ENCODE measurements at regions of chr12 and their contacts with region 1.

Region 1: GRCh38 chr12:57175428-57176138 is 28.2 kb upstream of the LRP1-AS start:
- H3K4me3 ChIP-seq: no peak overlapping the region
- H3K27ac ChIP-seq: no peak overlapping the region
- H3K4me1 ChIP-seq: no peaks in the 10 kb centered on the region
- CTCF ChIP-seq: peak; percentile 92

Region 2: DNA sequence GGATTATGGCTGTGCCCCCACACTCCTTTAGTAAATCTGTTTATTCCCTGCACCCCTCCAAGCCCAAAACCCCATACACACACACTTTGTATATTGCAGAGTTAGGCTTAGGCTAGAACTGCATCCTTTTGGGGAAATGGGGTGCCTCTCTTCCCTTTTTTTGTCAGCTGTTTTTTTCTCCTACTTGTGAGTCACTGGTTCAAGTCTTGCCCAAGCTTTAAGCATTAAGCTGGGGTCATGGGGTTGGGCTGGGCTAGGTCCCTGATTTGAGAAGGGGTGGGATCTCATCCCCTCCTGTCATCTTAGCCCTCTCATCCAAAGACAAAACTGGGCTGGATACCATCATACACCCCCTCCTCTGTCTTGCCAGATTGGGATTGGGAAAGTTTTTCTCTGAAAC is 45.7 kb before region 1 on chr12:
- CTCF ChIA-PET with region 1: interaction called, 259 read pairs
- POLR2A ChIA-PET with region 1: interaction called, 18 read pairs
- H3K4me3 ChIP-seq: no peak overlapping the region
- H3K27ac ChIP-seq: no peak overlapping the region
- H3K4me1 ChIP-seq: peaks cover 10% of the 10 kb centered on the region
- CTCF ChIP-seq: no peak

Region 3: GRCh38 chr12:57135527-57136326 is 39.9 kb before region 1 on chr12:
- CTCF ChIA-PET with region 1: interaction called, 25 read pairs
- POLR2A ChIA-PET with region 1: no interaction called
- H3K4me3 ChIP-seq: no peak overlapping the region
- H3K27ac ChIP-seq: no peak overlapping the region
- H3K4me1 ChIP-seq: no peaks in the 10 kb centered on the region; the same call in 1 of the 2 replicates
- CTCF ChIP-seq: no peak

Region 4: DNA sequence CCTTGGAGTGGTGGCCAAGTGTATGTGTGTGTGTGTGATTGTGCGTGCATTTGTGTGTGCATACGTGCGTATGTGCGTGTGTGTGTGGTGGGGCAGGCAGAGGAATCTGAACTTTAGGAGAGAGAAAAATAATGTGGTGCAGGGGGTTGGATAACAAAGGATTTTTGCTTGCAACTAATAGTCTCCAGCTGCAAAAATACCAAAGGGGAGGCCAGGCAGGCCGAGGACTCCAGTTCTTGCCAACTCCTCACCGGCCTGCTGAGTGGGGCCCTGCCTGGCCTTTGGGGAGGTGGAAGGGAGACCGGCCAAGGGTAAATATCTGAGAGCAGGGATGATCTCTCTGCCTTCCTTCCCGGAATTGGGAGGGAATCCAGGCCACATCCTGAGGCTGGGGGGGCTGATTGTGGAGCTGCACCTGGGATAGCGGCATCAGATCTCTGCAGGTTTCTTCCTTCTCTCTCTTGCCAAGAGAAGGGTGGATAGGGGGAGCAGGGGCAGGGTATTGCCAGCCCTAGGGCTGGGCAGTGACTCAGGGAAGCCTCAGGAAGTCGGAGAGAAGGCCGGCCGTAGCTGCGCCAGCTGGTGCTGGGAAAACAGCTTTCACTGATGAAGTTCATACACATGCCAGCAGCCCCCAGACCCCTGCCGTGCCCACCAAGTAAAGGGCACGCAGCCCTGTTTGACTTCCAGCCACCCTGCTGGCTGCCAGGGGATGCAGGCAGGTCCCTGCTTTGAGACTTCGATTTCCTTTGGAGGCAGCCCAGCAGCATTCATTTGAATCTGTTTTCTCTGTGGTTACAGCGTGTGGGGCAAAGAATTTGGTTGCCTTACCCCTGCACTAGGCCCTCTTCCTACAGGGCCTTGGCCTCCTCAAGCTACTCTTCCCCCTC is 23.6 kb before region 1 on chr12:
- CTCF ChIA-PET with region 1: interaction called, 10 read pairs
- POLR2A ChIA-PET with region 1: no interaction called
- H3K4me3 ChIP-seq: no peak overlapping the region
- H3K27ac ChIP-seq: no peak overlapping the region
- H3K4me1 ChIP-seq: no peaks in the 10 kb centered on the region
- CTCF ChIP-seq: no peak

Region 5: DNA sequence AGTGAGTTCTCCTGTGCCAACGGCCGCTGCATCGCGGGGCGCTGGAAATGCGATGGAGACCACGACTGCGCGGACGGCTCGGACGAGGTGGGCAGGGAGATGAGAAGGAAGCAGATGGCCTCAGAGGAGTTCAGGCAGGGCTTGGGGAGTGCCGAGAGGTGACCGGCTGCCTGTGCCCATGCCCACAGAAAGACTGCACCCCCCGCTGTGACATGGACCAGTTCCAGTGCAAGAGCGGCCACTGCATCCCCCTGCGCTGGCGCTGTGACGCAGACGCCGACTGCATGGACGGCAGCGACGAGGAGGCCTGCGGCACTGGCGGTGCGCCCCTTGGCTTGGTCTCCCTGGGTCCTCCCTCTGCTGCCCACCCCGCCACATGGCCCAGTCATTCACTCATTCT is 27.6 kb after region 1 on chr12:
- CTCF ChIA-PET with region 1: no interaction called
- POLR2A ChIA-PET with region 1: no interaction called
- H3K4me3 ChIP-seq: no peak overlapping the region
- H3K27ac ChIP-seq: no peak overlapping the region
- H3K4me1 ChIP-seq: no peaks in the 10 kb centered on the region
- CTCF ChIP-seq: no peak

Region 6: GRCh38 chr12:57268264-57268663 is 92.7 kb after region 1 on chr12:
- CTCF ChIA-PET with region 1: no interaction called
- POLR2A ChIA-PET with region 1: no interaction called
- H3K4me3 ChIP-seq: no peak overlapping the region
- H3K27ac ChIP-seq: no peak overlapping the region
- H3K4me1 ChIP-seq: no peaks in the 10 kb centered on the region
- CTCF ChIP-seq: no peak